ENCODE measurements at regions of chr9 and their contacts with region 1.

Region 1: DNA sequence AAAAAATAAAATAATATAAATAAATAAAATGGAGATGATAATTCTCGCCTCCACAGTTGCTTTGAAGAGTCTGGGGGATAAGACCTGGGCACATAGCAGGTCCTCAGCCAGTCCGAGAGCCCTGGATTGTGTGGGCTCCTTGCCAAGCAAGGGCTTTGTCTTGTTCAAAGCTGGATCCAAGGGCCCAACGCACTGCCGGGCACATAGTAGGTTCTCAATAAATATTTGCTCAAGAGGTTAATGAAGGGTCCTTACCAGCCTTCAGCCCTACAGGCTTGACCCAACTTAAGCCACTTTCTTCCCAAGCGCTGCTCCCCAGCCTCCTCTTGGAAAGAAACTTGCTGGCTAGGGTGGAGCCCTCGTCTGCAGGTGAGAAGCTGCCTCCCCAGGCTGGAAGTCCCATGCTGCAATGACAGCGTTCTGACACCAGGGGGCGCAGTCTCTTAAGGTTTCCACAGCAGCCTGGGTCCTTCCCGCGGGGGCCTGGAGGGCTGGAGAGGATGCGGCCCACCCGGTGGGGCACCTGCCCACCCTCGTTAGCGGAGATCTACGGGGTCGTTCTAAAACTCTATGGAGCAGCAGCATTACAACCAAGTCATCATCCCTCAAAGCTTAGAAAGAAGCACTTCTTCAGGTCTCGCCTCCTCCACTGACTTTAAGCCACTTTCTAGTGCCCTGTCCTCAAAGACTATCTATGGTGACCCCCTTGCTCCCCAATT is 115.2 kb downstream of the LHX2 start:
- DNase-seq: peak; percentile 68 to 82
- ATAC-seq: peak; percentile 58 to 80 (median 76)
- H3K4me3 ChIP-seq: no peak overlapping the region
- H3K27ac ChIP-seq: no peak overlapping the region
- H3K4me1 ChIP-seq: no peaks in the 10 kb centered on the region
- H3K27me3 ChIP-seq: no peaks in the 10 kb centered on the region
- CTCF ChIP-seq: peak; percentile 98

Region 2: DNA sequence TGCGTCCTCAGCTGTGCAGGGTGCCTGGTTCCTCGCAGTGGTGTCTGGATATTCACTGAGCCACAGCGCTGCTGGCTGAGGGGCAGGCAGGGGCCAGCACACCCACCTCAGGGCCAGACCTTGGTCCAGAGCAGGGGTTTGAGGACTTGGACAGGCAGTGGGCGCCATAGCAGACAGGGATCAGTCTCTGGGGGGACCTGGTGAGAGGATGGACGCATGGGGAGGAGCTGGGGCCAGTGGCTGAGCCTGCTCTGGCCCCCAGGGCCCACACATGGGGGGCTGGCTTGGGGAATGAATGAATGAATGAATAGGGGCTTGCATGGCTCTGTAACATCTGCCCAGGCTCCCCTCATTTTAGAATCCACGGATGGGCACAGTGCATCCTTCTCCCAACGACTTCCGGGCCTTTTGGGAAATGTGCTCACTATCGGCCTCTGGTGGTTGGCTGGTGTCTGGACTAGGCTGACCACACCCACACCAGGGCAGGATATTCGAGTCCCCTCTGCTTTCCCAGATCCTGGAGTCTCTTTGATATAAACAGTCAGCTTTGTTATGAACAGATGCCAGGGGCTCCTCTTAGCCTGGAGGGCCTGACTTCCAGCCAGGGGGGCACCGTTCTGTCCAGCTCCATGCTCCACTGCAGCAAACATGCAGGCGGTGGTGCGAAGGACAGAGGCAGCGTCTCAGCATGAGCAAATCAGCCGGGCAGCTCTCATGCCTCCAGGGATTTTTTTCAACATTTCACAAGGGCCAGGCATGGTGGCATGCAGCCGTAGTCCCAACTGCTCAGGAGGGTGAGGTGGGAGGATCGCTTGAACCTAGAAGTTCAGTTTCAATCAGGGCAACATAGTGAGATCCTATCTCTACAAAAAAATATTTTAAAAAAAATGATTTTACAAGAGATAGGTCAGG is 193.6 kb after region 1 on chr9:
- intact Hi-C with region 1: loop called (anchors 1 to 2 kb)
- DNase-seq: peak; percentile 66 to 81
- ATAC-seq: peak; percentile 76 to 92 (median 86)
- H3K4me3 ChIP-seq: no peak overlapping the region
- H3K27ac ChIP-seq: no peak overlapping the region
- H3K4me1 ChIP-seq: no peaks in the 10 kb centered on the region
- H3K27me3 ChIP-seq: no peaks in the 10 kb centered on the region
- CTCF ChIP-seq: peak; percentile 80

Region 3: GRCh38 chr9:124392871-124393460 is 266.2 kb after region 1 on chr9:
- intact Hi-C with region 1: loop called in 1 of 2 experiments (anchors 10 kb)
- DNase-seq: no peak
- ATAC-seq: peak; percentile 70 to 84 (median 75)
- H3K4me3 ChIP-seq: no peak overlapping the region
- H3K27ac ChIP-seq: peak overlapping the region; percentile 58
- H3K4me1 ChIP-seq: peaks cover 77% of the 10 kb centered on the region
- H3K27me3 ChIP-seq: no peaks in the 10 kb centered on the region
- CTCF ChIP-seq: peak; percentile 28

Region 4: DNA sequence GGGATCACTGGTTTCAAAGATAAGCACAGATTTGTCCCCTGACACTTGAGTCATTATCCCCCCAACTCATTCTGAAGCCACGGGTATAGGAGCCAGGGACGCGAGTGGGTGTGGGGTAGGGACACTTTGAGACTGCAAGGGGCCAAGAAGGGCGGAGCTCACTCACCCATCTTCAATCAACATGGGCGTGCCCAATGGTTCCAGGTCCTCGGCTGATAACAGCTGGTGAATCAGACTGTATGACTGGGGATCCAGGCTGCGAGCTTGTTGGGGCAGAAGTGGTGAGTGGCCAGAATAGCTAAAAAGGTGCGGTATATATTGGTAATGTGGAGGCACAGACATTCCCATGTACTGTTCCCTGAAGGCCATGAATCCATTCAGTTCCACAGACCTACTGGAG is 411.2 kb after region 1 on chr9:
- intact Hi-C with region 1: loop called (anchors 2 to 5 kb)
- DNase-seq: no peak
- ATAC-seq: no peak
- H3K4me3 ChIP-seq: no peak overlapping the region
- H3K27ac ChIP-seq: no peak overlapping the region
- H3K4me1 ChIP-seq: no peaks in the 10 kb centered on the region
- H3K27me3 ChIP-seq: no peaks in the 10 kb centered on the region
- CTCF ChIP-seq: no peak

Measured in psoas muscle (tissue), 8 donors.